ENCODE measurements at regions of chr10 and their contacts with region 1.

Region 1: GRCh38 chr10:112006831-112007230 is 176.7 kb downstream of the GPAM start:
- DNase-seq: no peak
- H3K4me3 ChIP-seq: no peak overlapping the region
- H3K27ac ChIP-seq: no peak overlapping the region
- H3K4me1 ChIP-seq: no peaks in the 10 kb centered on the region; a peak in 1 of 7 replicates
- H3K27me3 ChIP-seq: no peaks in the 10 kb centered on the region; a peak in 1 of 7 replicates
- CTCF ChIP-seq: no peak
- EP300 ChIP-seq: no peak
- POLR2A ChIP-seq: no peak
- RAD21 ChIP-seq: no peak

Region 2: GRCh38 chr10:111990734-111991133 is 16.1 kb before region 1 on chr10:
- CTCF ChIA-PET with region 1: interaction called, 21 read pairs
- POLR2A ChIA-PET with region 1: no interaction called
- DNase-seq: no peak
- H3K4me3 ChIP-seq: no peak overlapping the region
- H3K27ac ChIP-seq: no peak overlapping the region
- H3K4me1 ChIP-seq: no peaks in the 10 kb centered on the region
- H3K27me3 ChIP-seq: no peaks in the 10 kb centered on the region
- CTCF ChIP-seq: peak in 2 of 3 experiments; percentile 37 to 57; a peak in 3 of 4 replicates
- EP300 ChIP-seq: no peak
- POLR2A ChIP-seq: no peak
- RAD21 ChIP-seq: peak; percentile 60 to 62

Region 3: DNA sequence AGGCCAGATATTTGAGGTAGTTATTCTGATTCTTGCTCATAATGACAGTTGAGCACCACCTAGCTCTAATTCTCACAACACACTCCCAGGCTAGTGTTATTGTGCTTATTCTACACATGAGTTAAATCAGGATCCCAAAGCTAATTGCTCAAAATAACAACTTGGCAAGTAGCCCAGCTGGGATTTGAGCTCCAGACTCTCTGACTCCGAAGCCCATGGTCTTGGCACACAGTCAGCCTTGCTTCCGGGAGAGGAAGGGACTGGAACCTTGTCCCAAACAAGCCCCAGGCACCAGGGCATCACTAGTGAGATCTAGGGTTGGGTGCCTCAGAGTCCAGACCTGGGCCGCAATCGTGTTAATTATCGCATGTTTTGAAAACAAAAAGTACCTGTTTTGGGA is 75.3 kb after region 1 on chr10:
- CTCF ChIA-PET with region 1: no interaction called
- POLR2A ChIA-PET with region 1: no interaction called
- DNase-seq: no peak
- H3K4me3 ChIP-seq: no peak overlapping the region
- H3K27ac ChIP-seq: no peak overlapping the region
- H3K4me1 ChIP-seq: peaks cover 0 to 3% (median 1%) of the 10 kb centered on the region in 4 experiments; a peak in 1 of 7 replicates
- H3K27me3 ChIP-seq: peaks cover 0 to under 1% (median 0%) of the 10 kb centered on the region in 4 experiments; a peak in 1 of 7 replicates
- CTCF ChIP-seq: no peak
- EP300 ChIP-seq: no peak
- POLR2A ChIP-seq: no peak
- RAD21 ChIP-seq: no peak

Measured in H1 (cell line).